Naive thymus-derived CD4-positive, alpha-beta T cell (primary cell): ENCODE measurements at regions of chr5 and their contacts with region 1.

Region 1: GRCh38 chr5:141878711-141879425 is 658 bp upstream of the PCDH1 start:
- DNase-seq: peak; percentile 73 to 94 (median 88)
- ATAC-seq: peak; percentile 92
- H3K4me3 ChIP-seq: peak overlapping the region; percentile 44
- H3K4me3 Mint-ChIP-seq: peak overlapping the region; percentile 77 to 91 (median 84)
- H3K27ac ChIP-seq: no peak overlapping the region
- H3K27ac Mint-ChIP-seq: peak overlapping the region in 5 of 9 donors; percentile 0 to 47 (median 11)
- H3K4me1 ChIP-seq: peaks cover 24 to 26% of the 10 kb centered on the region in 2 donors
- H3K4me1 Mint-ChIP-seq: peaks cover 20 to 33% (median 28%) of the 10 kb centered on the region in 7 donors
- H3K27me3 ChIP-seq: peaks cover 8 to 32% of the 10 kb centered on the region in 2 donors
- H3K27me3 Mint-ChIP-seq: peaks cover 66 to 88% (median 75%) of the 10 kb centered on the region in 5 donors

Region 2: DNA sequence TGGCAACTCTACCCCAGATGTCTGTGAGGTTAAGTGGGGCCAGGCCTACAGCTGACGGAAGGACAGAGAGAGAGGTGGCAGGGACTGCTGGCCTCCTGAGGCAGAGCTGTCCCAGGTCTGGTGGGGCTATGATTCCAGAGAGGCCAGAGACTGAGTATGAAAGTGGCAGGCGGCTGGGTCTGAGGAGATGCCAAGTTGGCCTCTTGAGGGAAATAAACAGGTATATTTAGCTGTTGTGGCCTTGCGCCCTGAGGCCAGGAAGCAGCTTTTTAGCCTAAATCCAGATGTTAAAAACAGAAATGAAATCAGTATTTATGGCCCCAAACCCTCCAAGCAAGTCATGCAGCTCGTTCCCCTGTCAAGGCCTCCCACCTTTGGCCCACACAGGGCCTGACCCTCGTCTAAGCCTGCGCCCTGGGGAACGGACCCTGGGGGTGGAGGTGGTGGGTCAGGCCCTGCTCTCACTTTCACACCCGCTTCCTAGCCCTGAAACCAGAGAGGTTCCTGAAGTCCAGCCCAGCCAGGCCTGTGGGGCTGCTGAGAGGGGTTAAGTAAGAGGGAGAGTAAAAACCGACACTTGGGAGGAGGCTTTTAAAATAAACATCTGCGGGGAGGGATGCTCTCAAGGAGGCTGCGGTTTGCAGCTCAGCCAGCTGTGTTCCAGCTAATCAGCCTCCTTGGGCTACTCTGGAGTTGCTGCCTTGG is 371.3 kb before region 1 on chr5:
- CTCF ChIA-PET with region 1: no interaction called
- POLR2A ChIA-PET with region 1: no interaction called
- intact Hi-C with region 1: no loop called
- DNase-seq: no peak
- ATAC-seq: no peak
- H3K4me3 ChIP-seq: no peak overlapping the region
- H3K4me3 Mint-ChIP-seq: no peak overlapping the region
- H3K27ac ChIP-seq: no peak overlapping the region
- H3K27ac Mint-ChIP-seq: no peak overlapping the region
- H3K4me1 ChIP-seq: no peaks in the 10 kb centered on the region
- H3K4me1 Mint-ChIP-seq: peaks cover 3 to 9% (median 3%) of the 10 kb centered on the region in 7 donors
- H3K27me3 ChIP-seq: no peaks in the 10 kb centered on the region
- H3K27me3 Mint-ChIP-seq: peaks cover 0 to 7% (median 0%) of the 10 kb centered on the region in 5 donors

Region 3: GRCh38 chr5:141664732-141665461 is 214.0 kb before region 1 on chr5:
- CTCF ChIA-PET with region 1: interaction called, 54 read pairs
- POLR2A ChIA-PET with region 1: no interaction called
- intact Hi-C with region 1: loop called (anchors 1 kb)
- DNase-seq: peak; percentile 36 to 75 (median 61)
- ATAC-seq: peak; percentile 94
- H3K4me3 ChIP-seq: no peak overlapping the region
- H3K4me3 Mint-ChIP-seq: no peak overlapping the region
- H3K27ac ChIP-seq: no peak overlapping the region
- H3K27ac Mint-ChIP-seq: no peak overlapping the region
- H3K4me1 ChIP-seq: no peaks in the 10 kb centered on the region
- H3K4me1 Mint-ChIP-seq: peaks cover 0 to 6% (median 3%) of the 10 kb centered on the region in 7 donors
- H3K27me3 ChIP-seq: no peaks in the 10 kb centered on the region
- H3K27me3 Mint-ChIP-seq: no peaks in the 10 kb centered on the region

Region 4: DNA sequence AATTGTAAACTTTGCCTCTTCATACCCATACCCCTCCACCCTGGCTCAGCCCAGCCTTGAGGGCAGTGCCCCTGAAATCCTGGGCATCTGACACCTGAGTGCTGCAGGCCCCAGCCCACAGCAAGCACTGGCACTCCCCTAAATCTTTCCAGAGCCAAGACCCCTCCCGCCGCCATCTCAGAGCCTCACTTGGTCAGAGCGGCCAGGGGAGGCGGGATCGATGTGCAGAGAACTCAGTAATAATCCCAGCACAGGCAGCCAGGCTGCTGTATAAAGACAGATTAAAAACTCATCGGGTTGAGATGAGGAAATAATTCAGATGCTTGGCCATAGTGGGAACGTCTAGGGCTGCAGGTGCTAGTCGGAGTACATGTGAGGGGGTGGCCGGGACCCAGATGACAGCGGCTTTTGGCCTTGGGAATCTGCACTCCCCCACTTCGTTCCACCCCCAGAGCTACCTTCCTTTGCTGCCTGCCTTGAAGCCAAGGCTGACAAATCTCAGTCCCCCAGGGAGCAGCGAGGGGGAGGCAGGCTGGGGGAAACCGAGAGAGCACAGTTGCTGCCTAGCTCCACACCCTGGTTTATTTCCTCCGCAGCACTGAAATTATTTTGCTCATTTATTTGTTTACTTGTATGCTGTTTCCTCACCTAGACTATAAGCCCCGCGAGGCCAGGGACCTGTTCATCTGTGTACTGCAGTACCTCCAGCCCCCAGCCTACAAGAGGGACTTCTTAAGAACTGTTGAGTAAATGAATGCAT is 177.3 kb before region 1 on chr5:
- CTCF ChIA-PET with region 1: interaction called, 93 read pairs
- POLR2A ChIA-PET with region 1: interaction called, 23 read pairs
- intact Hi-C with region 1: loop called (anchors 1 kb)
- DNase-seq: no peak
- ATAC-seq: peak; percentile 28
- H3K4me3 ChIP-seq: peak overlapping the region; percentile 58
- H3K4me3 Mint-ChIP-seq: peak overlapping the region in 7 of 10 donors; percentile 76 to 89 (median 83)
- H3K27ac ChIP-seq: no peak overlapping the region
- H3K27ac Mint-ChIP-seq: peak overlapping the region in 4 of 9 donors; percentile 14 to 54 (median 18)
- H3K4me1 ChIP-seq: peaks cover 9 to 11% of the 10 kb centered on the region in 2 donors
- H3K4me1 Mint-ChIP-seq: peaks cover 5 to 20% (median 12%) of the 10 kb centered on the region in 7 donors
- H3K27me3 ChIP-seq: no peaks in the 10 kb centered on the region
- H3K27me3 Mint-ChIP-seq: peaks cover 25 to 47% (median 40%) of the 10 kb centered on the region in 5 donors

Region 5: DNA sequence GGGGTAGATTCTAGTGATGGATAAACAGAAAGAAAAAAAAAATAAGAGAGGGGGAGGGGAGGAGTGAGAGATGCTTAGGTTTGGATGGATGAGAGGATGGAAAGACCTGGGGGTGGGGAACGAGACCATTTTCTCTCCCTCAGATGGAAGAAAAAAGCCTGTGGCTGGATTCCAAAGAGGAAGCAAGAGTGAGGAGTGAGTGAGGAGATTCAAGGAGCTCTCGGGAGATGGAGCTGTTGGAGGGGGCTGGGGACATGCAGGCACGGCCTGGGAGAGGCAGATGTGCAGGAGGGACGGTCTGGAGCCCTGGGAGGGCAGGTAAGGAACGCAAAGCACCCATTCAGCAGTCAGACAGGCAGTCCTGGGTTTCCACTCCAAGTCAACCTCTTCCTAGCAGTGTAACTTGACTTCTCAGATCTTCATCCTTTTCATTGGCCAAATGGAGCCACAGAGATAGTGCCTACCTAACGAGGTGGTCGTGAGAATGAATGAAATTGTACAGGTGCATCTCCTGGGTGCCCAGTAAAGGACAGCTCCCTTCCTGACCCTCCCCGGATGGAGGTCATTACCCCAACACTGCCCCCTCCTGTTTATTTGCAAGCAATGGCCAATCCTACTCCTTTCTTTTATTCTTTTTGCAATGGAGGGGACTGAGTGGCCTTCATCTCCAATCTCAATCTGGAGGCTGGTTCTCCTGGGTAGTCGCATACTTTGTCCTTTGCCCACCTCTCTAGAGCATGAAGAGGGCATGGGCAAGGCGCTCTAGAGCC is 52.9 kb before region 1 on chr5:
- CTCF ChIA-PET with region 1: interaction called, 8 read pairs
- POLR2A ChIA-PET with region 1: no interaction called
- intact Hi-C with region 1: loop called (anchors 5 kb)
- DNase-seq: no peak
- ATAC-seq: peak; percentile 48
- H3K4me3 ChIP-seq: no peak overlapping the region
- H3K4me3 Mint-ChIP-seq: no peak overlapping the region
- H3K27ac ChIP-seq: no peak overlapping the region
- H3K27ac Mint-ChIP-seq: peak overlapping the region in 1 of 9 donors; percentile 57
- H3K4me1 ChIP-seq: no peaks in the 10 kb centered on the region
- H3K4me1 Mint-ChIP-seq: peaks cover 0 to 8% (median 0%) of the 10 kb centered on the region in 7 donors
- H3K27me3 ChIP-seq: no peaks in the 10 kb centered on the region
- H3K27me3 Mint-ChIP-seq: peaks cover 0 to 34% (median 14%) of the 10 kb centered on the region in 5 donors

Region 6: DNA sequence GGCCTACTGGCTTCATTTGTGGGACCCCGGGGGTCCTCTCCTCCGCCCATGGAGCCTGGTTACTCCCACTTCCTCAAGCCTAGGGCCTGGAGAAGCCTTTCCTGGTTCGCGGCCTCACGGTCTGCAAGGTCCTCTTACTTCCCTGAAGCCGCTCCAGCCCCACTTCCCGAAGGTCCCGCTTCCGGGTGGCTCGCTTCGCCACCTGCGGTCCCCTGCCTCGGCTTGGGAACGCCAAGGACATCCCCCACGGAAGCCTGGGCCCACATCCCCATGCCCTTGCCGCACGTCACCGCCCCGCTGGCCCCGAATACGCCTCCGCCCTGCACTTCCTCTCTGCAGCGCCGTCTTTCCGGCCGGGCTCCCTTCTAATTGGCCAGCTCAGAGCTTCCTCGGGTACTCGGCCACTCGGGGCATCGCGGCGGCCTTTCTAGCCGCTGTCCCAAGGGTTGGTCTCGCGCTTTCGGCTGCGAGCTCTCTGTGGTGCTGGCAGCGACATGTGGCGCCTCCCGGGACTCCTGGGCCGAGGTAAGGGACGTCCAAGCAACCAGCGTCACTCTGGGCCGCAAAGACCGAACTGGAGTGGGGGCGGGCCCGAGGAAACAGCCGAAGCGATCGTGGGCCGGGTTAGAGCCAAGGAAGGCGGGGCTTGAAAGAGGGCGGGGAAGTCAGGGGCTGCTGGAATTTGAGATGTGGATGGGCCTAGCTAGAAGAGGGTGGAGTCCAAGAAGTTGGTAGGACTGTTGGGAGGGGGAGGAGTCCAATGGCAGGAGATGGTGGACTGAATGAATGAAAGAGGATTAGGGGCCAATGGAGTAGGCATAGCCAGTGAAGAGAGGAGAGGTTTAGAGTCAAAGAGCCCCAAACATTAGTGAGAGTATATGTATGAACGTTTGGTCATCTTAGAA is 44.8 kb after region 1 on chr5 and contains the start of gene DELE1:
- CTCF ChIA-PET with region 1: interaction called, 11 read pairs
- POLR2A ChIA-PET with region 1: no interaction called
- intact Hi-C with region 1: loop called (anchors 1 to 2 kb)
- DNase-seq: peak; percentile 79 to 92 (median 90)
- ATAC-seq: peak; percentile 97
- H3K4me3 ChIP-seq: peak within 1 kb of the TSS; percentile 81
- H3K4me3 Mint-ChIP-seq: peak within 1 kb of the TSS; percentile 88 to 98 (median 94)
- H3K27ac ChIP-seq: peak within 1 kb of the TSS; percentile 98
- H3K27ac Mint-ChIP-seq: peak within 1 kb of the TSS; percentile 87 to 99 (median 98)
- H3K4me1 ChIP-seq: peaks cover 10 to 14% of the 10 kb centered on the region in 2 donors
- H3K4me1 Mint-ChIP-seq: peaks cover 23 to 54% (median 36%) of the 10 kb centered on the region in 7 donors
- H3K27me3 ChIP-seq: no peaks in the 10 kb centered on the region
- H3K27me3 Mint-ChIP-seq: no peaks in the 10 kb centered on the region
- total RNA-seq, gene DELE1: 77.3 to 101 (median 88.2) TPM

Region 7: GRCh38 chr5:143471041-143471521 is 1592.2 kb after region 1 on chr5:
- CTCF ChIA-PET with region 1: no interaction called
- POLR2A ChIA-PET with region 1: no interaction called
- intact Hi-C with region 1: no loop called
- DNase-seq: no peak
- ATAC-seq: no peak
- H3K4me3 ChIP-seq: no peak overlapping the region
- H3K4me3 Mint-ChIP-seq: no peak overlapping the region
- H3K27ac ChIP-seq: no peak overlapping the region
- H3K27ac Mint-ChIP-seq: no peak overlapping the region
- H3K4me1 ChIP-seq: no peaks in the 10 kb centered on the region
- H3K4me1 Mint-ChIP-seq: no peaks in the 10 kb centered on the region
- H3K27me3 ChIP-seq: no peaks in the 10 kb centered on the region
- H3K27me3 Mint-ChIP-seq: peaks cover 0 to 7% (median 6%) of the 10 kb centered on the region in 5 donors